PC-3 (cell line): ENCODE measurements at regions of chr5 and their contacts with region 1.

Region 1: DNA sequence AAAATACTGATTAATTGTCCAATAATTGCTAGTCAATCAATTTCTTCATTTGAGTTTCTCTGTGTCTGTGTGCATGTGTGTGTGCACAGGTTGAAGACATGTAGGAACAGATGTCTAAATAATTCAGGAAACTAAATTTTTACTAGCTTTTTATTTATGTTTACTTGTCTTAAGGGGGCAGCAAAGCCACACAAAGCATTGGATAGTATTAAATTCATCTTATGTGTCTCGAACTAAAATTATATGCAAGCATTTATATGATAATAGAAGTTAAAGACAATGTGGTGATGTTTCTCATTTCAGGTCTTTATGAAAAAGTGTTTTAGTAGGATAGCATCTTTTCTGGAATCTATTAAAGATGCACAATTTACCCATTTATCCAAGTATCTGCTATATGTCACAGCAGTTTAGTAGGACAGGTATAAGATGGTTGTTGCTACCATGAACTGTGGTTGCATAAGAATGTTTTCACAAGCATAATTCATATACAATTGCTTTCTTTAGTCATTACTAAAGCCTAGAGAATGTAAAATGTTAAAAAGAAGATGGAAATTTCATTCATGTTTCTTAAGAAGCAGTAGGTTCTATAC is 784.6 kb upstream of the NUDT12 start:
- DNase-seq: peak; percentile 61
- ATAC-seq: no peak
- H3K4me3 ChIP-seq: no peak overlapping the region
- H3K27ac ChIP-seq: no peak overlapping the region
- H3K4me1 ChIP-seq: peaks cover 19% of the 10 kb centered on the region
- H3K27me3 ChIP-seq: no peaks in the 10 kb centered on the region
- CTCF ChIP-seq: peak; percentile 87

Region 2: DNA sequence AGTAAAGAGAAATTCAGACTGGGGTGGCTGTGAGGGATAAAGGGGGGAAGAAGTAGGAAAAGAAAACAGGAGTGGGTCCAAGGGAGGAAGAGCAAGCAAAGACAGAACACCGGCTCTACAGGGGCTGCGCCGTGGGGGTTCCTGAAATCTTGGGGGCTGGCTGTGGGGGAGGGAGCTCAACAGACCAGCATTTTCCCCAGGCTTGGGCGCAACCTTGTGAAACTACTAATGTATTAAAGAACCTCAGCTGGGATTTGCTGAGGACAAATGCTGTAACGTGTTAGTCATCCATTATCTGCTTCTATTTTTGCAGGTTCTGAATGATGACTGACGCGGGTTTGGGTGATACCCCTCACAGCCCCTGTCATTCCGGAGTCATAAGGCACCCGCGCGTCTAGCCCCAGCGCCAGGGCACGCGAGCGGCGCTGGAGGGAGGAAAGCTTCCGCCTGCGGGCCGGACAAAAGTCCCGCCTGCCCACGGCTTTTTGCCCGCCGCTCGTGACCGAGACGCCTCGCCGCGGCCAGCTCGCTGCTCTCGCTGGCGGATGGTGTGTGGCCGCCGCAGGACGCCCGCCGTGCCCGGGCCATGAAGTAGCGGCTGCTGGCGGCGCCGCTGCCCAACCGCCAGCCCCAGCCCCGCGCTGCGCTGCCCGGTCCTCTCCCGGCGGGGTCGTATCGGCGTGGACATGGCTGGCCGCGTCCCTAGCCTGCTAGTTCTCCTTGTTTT is 1481.5 kb before region 1 on chr5:
- CTCF ChIA-PET with region 1: no interaction called
- POLR2A ChIA-PET with region 1: interaction called, 4 read pairs
- intact Hi-C with region 1: loop called (anchors 5 kb)
- DNase-seq: peak; percentile 81
- ATAC-seq: peak; percentile 81
- H3K4me3 ChIP-seq: peak overlapping the region; percentile 87
- H3K27ac ChIP-seq: peak overlapping the region; percentile 58
- H3K4me1 ChIP-seq: peaks cover 22% of the 10 kb centered on the region
- H3K27me3 ChIP-seq: no peaks in the 10 kb centered on the region
- CTCF ChIP-seq: no peak

Region 3: DNA sequence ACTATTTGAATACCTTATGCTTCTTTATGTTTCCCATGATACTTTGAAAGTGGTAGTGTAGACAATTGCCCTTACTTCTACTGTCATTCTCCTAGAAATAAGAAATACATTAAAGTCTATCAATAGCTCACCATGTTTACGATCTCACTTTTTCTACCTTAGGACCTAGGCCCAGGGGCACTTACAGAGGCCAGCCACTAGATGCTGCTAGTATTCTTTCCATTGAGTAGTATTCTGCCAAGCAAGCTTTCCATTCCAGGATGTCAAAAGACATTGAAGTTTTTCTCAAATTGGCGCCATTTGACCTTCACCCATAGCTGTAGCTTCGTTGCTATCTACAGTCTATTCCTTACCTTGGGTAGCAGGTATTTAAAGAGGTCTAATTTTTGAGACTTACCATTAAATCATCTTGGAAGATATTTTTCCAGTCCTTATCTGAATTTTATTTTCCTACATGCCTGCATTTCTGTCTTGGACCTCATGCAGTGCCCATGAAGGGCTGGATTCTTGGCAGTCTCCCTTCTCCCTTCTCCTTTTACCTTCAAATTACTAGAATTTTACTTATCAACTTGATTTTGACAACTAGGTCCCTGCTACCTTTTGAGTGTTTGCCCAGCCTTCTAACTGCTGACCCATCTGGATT is 538.6 kb before region 1 on chr5:
- CTCF ChIA-PET with region 1: no interaction called
- POLR2A ChIA-PET with region 1: no interaction called
- intact Hi-C with region 1: loop called (anchors 2 kb)
- DNase-seq: peak; percentile 85
- ATAC-seq: peak; percentile 94
- H3K4me3 ChIP-seq: no peak overlapping the region
- H3K27ac ChIP-seq: no peak overlapping the region
- H3K4me1 ChIP-seq: peaks cover 6% of the 10 kb centered on the region
- H3K27me3 ChIP-seq: no peaks in the 10 kb centered on the region
- CTCF ChIP-seq: peak; percentile 100

Region 4: DNA sequence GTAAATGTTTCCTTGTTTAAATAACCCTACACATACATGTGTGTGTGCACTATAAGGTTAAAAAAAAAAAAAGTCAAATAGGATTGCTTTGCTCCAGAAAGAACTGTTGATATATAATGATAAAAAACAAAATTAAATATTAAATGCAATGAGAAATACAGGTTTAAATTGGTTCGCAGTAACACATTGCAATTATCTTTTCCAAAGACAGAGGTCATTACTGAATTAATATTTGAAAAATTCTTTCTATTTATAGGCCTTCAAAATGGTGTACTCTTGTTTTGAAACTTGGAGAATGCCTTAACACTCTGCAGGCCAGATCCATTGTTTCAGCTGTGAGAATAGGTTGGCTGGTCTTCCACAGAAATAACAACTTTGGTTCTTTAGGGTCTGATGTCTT is 465.7 kb before region 1 on chr5:
- CTCF ChIA-PET with region 1: no interaction called
- POLR2A ChIA-PET with region 1: no interaction called
- intact Hi-C with region 1: no loop called
- DNase-seq: no peak
- ATAC-seq: no peak
- H3K4me3 ChIP-seq: no peak overlapping the region
- H3K27ac ChIP-seq: no peak overlapping the region
- H3K4me1 ChIP-seq: no peaks in the 10 kb centered on the region
- H3K27me3 ChIP-seq: no peaks in the 10 kb centered on the region
- CTCF ChIP-seq: no peak

Region 5: GRCh38 chr5:104297076-104297475 is 50.1 kb before region 1 on chr5:
- CTCF ChIA-PET with region 1: no interaction called
- POLR2A ChIA-PET with region 1: no interaction called
- intact Hi-C with region 1: loop called (anchors 1 kb)
- DNase-seq: peak; percentile 61
- ATAC-seq: peak; percentile 68
- H3K4me3 ChIP-seq: no peak overlapping the region
- H3K27ac ChIP-seq: peak overlapping the region; percentile 11; the same call in 1 of the 2 replicates
- H3K4me1 ChIP-seq: peaks cover 19% of the 10 kb centered on the region
- H3K27me3 ChIP-seq: no peaks in the 10 kb centered on the region
- CTCF ChIP-seq: no peak

Region 6: GRCh38 chr5:104327801-104328200 is 19.4 kb before region 1 on chr5:
- CTCF ChIA-PET with region 1: no interaction called
- POLR2A ChIA-PET with region 1: no interaction called
- intact Hi-C with region 1: no loop called
- DNase-seq: no peak
- ATAC-seq: no peak
- H3K4me3 ChIP-seq: no peak overlapping the region
- H3K27ac ChIP-seq: no peak overlapping the region
- H3K4me1 ChIP-seq: no peaks in the 10 kb centered on the region
- H3K27me3 ChIP-seq: no peaks in the 10 kb centered on the region
- CTCF ChIP-seq: no peak

Region 7: DNA sequence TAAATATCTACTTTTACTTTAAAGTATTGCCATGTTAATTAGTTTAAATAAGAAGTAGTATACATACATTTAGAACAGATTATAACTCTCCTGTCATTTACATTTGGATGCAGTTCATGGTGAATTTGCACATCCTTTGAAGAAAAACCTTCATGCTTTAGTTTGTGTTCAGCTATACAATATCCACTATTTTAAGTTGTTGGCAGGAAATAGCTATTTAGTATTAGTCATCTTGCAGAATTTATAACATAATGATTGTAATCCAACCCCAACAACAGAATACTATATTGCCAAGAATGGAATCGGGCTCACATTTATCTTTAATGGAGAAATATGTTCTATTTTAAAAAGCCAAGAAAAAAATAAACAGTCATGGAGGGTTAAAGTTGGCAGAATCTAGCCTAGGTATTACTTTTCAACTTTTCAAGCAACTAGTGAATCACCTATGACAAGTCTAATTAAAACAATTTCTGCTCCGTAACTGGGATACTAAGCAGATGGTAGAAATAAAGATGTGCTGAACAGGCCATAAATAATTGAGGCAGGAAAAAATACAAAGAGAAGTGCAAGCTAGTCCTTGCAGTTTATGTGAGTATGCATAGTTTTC is 386.0 kb after region 1 on chr5:
- CTCF ChIA-PET with region 1: no interaction called
- POLR2A ChIA-PET with region 1: no interaction called
- intact Hi-C with region 1: loop called (anchors 1 kb)
- DNase-seq: peak; percentile 49
- ATAC-seq: peak; percentile 93
- H3K4me3 ChIP-seq: no peak overlapping the region
- H3K27ac ChIP-seq: no peak overlapping the region
- H3K4me1 ChIP-seq: peaks cover 8% of the 10 kb centered on the region; the same call in 1 of the 2 replicates
- H3K27me3 ChIP-seq: no peaks in the 10 kb centered on the region
- CTCF ChIP-seq: no peak

Region 8: DNA sequence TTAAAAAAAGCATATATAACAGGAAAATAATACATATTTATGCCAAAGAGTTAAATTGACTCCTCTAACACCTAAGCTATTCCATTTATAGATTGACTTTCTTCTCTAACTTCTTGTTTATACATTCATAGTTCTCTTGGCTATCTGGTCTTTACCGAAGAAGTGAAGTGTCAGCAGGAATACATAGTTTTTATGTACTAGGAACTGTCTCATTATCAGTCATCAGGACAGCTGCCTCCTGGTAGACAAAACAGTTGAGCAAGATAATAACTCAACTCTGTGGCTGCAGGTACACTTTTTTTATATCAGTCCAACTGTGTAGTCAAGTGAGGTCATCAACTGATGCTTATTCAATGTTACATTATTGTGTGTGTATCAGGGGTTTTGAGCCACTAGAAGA is 651.4 kb after region 1 on chr5:
- CTCF ChIA-PET with region 1: no interaction called
- POLR2A ChIA-PET with region 1: no interaction called
- intact Hi-C with region 1: loop called (anchors 10 kb)
- DNase-seq: peak; percentile 65
- ATAC-seq: peak; percentile 60
- H3K4me3 ChIP-seq: no peak overlapping the region
- H3K27ac ChIP-seq: peak overlapping the region; percentile 80
- H3K4me1 ChIP-seq: peaks cover 18% of the 10 kb centered on the region
- H3K27me3 ChIP-seq: no peaks in the 10 kb centered on the region
- CTCF ChIP-seq: no peak